ENCODE measurements at regions of chr3 and their contacts with region 1.

Region 1: GRCh38 chr3:100254168-100254777 is 6.5 kb upstream of the TBC1D23 start:
- DNase-seq: peak; percentile 31
- H3K4me3 Mint-ChIP-seq: no peak overlapping the region
- H3K27ac Mint-ChIP-seq: no peak overlapping the region
- H3K4me1 Mint-ChIP-seq: peaks cover 5% of the 10 kb centered on the region
- H3K27me3 Mint-ChIP-seq: no peaks in the 10 kb centered on the region

Region 2: GRCh38 chr3:99833617-99834205 is 420.6 kb before region 1 on chr3:
- intact Hi-C with region 1: loop called (anchors 1 kb)
- DNase-seq: no peak
- H3K4me3 Mint-ChIP-seq: no peak overlapping the region
- H3K27ac Mint-ChIP-seq: no peak overlapping the region
- H3K4me1 Mint-ChIP-seq: peaks cover 12% of the 10 kb centered on the region
- H3K27me3 Mint-ChIP-seq: no peaks in the 10 kb centered on the region

Region 3: DNA sequence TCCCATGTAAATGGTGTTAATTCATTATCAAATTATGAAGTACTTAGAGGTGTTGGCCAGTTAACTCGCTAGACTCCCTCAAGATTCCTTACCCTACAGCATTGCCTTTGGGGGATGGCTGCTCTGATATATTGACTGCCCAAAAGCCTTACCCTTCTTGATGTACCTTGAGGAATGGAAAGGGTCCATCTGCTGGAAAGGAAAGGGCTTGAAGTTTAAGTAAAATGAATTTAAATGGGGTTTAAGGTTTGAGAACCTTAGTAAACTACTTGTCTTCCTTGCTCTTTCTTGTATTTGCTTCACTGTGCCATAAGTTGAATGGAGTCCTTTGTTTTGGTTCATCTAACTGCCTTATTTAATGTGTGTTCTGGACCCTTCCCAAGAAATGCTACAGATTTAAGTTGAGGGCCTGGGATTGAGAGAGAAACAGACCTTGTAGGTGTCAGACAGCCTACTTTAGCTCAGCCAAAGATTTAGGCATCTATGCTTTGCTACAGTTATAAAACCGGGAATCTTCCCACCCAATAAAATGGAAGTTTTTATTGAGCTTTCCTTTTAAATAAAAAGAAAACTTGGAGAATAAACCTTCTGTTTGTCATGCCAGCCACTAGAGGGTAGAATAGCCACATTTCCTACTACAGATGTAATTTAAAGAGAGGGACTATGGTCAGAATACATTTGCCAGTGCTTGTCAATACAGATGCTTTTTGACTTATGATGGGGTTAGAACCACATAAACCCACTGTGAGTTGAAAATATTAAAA is 411.3 kb before region 1 on chr3:
- intact Hi-C with region 1: loop called (anchors 1 kb)
- DNase-seq: no peak
- H3K4me3 Mint-ChIP-seq: no peak overlapping the region
- H3K27ac Mint-ChIP-seq: peak overlapping the region; percentile 31
- H3K4me1 Mint-ChIP-seq: peaks cover 26% of the 10 kb centered on the region
- H3K27me3 Mint-ChIP-seq: no peaks in the 10 kb centered on the region